ENCODE measurements at regions of chr10 and their contacts with region 1.

Region 1: GRCh38 chr10:123530166-123530870 is 135.8 kb upstream of the GPR26 start:
- DNase-seq: no peak
- H3K4me3 Mint-ChIP-seq: no peak overlapping the region
- H3K27ac Mint-ChIP-seq: no peak overlapping the region
- H3K4me1 Mint-ChIP-seq: no peaks in the 10 kb centered on the region
- H3K27me3 Mint-ChIP-seq: no peaks in the 10 kb centered on the region
- CTCF ChIP-seq: no peak

Region 2: DNA sequence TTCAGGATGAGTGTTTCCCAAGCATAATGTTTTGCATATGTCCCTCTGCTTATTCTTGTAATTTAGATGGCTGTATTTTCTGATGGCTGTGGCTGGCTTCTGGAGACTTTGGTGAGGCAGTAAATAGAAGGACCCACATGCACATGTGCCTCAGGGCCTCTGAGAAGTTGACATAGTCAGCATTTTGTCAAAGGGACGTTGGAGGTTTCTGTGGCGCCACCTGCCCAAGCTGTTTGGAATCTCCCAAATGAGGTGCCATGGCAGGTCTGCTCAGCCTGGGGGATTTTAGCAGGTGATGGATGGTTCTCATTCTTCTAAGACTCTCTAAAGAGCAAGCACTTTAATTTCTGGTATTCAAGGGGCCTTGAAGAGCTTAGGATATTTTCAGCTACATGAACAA is 860.5 kb before region 1 on chr10:
- CTCF ChIA-PET with region 1: no interaction called
- POLR2A ChIA-PET with region 1: no interaction called
- intact Hi-C with region 1: no loop called
- DNase-seq: no peak
- H3K4me3 Mint-ChIP-seq: no peak overlapping the region
- H3K27ac Mint-ChIP-seq: no peak overlapping the region
- H3K4me1 Mint-ChIP-seq: peaks cover 7% of the 10 kb centered on the region
- H3K27me3 Mint-ChIP-seq: peaks cover 36% of the 10 kb centered on the region
- CTCF ChIP-seq: no peak

Region 3: DNA sequence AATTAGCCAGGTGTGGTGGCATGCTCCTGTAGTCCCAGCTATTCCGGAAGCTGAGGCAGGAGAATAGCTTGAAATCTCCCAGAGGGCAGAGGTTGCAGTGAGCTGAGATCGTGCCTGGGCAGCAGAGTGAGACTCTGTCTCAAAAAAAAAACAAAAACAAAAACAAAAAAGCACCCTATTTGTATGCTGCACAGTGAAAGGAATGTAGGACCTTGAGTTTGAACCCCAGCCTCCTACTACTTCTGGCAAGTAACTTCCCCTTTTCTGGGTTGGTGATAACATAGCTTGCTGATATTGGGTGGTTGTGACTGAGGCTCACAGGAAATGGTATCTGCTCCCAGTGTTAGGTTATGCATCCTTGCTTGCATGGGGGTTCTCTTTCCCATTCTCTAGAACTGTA is 170.8 kb before region 1 on chr10:
- CTCF ChIA-PET with region 1: no interaction called
- POLR2A ChIA-PET with region 1: no interaction called
- intact Hi-C with region 1: no loop called
- DNase-seq: no peak
- H3K4me3 Mint-ChIP-seq: no peak overlapping the region
- H3K27ac Mint-ChIP-seq: no peak overlapping the region
- H3K4me1 Mint-ChIP-seq: no peaks in the 10 kb centered on the region
- H3K27me3 Mint-ChIP-seq: no peaks in the 10 kb centered on the region
- CTCF ChIP-seq: no peak

Region 4: DNA sequence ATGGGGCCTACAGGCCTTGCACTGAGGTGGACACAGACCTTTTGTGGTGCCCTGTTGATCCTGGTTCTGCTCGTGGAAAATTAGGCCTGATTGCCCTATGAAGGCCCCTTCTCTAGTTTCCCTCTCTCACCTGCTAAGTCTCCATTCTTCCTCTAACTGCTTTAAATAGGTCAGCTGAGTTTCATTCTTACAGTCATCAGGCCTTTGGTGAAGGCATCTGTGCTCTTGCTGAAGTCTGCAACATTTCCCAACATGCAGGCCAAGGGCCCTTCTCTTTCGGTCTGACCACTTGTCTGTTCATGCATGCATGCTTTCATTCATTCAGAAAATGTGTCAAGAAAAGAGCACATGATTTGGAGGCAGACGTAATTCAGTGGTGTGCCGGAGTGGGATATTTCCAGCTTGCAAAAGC is 132.1 kb before region 1 on chr10:
- CTCF ChIA-PET with region 1: no interaction called
- POLR2A ChIA-PET with region 1: no interaction called
- intact Hi-C with region 1: loop called (anchors 10 kb)
- DNase-seq: no peak
- H3K4me3 Mint-ChIP-seq: no peak overlapping the region
- H3K27ac Mint-ChIP-seq: no peak overlapping the region
- H3K4me1 Mint-ChIP-seq: no peaks in the 10 kb centered on the region
- H3K27me3 Mint-ChIP-seq: no peaks in the 10 kb centered on the region
- CTCF ChIP-seq: no peak

Measured in MCF 10A (cell line).